Right cardiac atrium (tissue), 5 donors: ENCODE measurements at regions of chr12 and their contacts with region 1.

Region 1: GRCh38 chr12:80763874-80764273 is 47.2 kb downstream of the MYF5 start:
- DNase-seq: no peak
- ATAC-seq: no peak
- H3K4me3 ChIP-seq: no peak overlapping the region
- H3K27ac ChIP-seq: no peak overlapping the region
- H3K4me1 ChIP-seq: no peaks in the 10 kb centered on the region
- H3K27me3 ChIP-seq: no peaks in the 10 kb centered on the region

Region 2: DNA sequence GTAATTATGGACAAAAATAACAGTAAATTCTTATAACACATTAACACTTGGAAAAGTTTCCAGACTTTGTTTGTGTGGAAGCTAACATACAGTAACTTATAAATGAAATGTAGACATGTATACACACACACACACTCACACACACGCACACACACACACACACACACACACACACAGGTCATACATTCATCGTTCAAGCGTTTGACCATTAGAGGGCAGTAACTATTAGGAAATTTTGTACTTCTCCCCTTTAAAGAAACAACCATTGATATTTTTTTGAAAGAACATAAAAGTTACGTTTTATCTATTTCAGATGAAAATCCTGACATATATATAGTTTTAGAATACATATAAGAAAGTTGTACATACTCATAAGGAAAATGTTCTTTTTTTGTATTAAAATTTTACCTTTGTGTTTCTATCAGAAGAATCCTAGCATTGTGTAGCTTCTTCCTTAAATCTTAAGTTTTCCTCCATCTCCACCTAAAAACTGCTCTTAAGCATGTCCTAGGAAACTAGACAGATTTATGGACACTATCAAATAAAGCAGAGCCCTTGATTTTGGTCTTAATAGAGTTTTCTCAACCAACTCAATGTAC is 290.9 kb before region 1 on chr12:
- intact Hi-C with region 1: loop called in 2 of 4 experiments (anchors 5 to 10 kb)
- DNase-seq: peak in 1 of 3 donors; percentile 50
- ATAC-seq: no peak
- H3K4me3 ChIP-seq: no peak overlapping the region
- H3K27ac ChIP-seq: no peak overlapping the region
- H3K4me1 ChIP-seq: no peaks in the 10 kb centered on the region
- H3K27me3 ChIP-seq: no peaks in the 10 kb centered on the region